Psoas muscle (tissue), 8 donors: ENCODE measurements at regions of chr2 and their contacts with region 1.

Region 1: DNA sequence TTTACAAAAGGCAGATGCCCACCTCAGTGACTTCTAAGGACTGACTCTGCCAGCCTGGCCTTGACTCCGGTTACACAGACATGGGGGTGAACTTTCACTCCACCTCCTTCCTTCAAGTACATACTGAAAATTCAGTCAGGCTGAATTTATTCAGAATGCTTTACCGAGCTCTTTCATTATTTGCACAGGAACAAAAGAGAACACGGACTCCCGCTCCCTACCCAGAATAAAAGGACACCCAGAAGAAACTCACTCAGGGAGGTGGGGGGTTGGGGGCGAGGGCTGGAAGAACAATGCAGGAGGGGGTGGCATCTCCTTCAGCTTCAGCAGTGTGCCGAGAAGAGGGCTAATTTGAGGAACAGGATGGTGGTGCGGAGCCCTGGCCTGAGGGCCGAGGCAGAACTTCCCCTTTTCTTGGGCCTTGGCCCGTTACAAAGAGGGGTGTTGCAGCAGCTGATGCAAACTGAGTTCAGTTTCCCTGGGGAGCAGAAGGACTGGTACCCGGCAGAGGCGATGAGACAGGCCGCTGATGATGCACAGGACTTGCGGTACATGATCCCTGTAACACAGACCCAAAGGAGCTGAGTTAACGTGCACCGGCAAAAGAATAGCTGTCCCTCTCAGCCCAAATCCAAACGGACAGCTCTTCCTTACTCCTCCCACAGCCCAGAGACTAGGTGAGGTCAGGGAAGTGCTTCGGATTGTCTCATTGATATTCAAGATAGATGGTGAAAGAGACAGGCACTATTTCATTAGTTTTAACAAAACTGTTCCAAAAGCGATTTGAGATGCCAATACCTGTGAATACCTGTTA is 24.1 kb downstream of the LYPD1 start:
- DNase-seq: no peak
- ATAC-seq: no peak
- H3K4me3 ChIP-seq: no peak overlapping the region
- H3K27ac ChIP-seq: no peak overlapping the region
- H3K4me1 ChIP-seq: no peaks in the 10 kb centered on the region
- H3K27me3 ChIP-seq: no peaks in the 10 kb centered on the region
- CTCF ChIP-seq: no peak

Region 2: DNA sequence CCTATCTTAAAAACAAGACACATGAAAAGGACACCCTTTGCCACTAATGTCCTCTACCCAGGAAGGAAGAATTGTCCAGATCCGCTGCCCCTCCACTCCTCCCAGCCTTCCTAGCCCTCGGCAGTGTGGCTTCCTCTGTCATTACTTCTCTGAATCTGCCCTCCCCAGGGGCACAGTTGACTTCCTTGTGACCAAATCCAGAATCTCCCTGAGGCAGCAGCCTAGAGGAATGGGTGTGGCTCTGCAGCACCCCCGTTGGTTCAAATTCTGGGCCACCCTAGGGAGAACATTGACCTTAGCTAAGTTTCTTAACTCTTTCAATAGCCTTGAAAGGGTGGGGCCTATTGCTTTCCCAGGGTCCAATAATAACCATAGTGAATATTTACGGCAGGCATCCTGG is 75.3 kb before region 1 on chr2:
- intact Hi-C with region 1: no loop called
- DNase-seq: no peak
- ATAC-seq: no peak
- H3K4me3 ChIP-seq: no peak overlapping the region
- H3K27ac ChIP-seq: no peak overlapping the region
- H3K4me1 ChIP-seq: no peaks in the 10 kb centered on the region
- H3K27me3 ChIP-seq: no peaks in the 10 kb centered on the region
- CTCF ChIP-seq: no peak

Region 3: GRCh38 chr2:132609101-132609890 is 36.6 kb before region 1 on chr2:
- intact Hi-C with region 1: no loop called
- DNase-seq: no peak
- ATAC-seq: no peak
- H3K4me3 ChIP-seq: no peak overlapping the region
- H3K27ac ChIP-seq: no peak overlapping the region
- H3K4me1 ChIP-seq: no peaks in the 10 kb centered on the region
- H3K27me3 ChIP-seq: peaks cover 0 to 2% (median 0%) of the 10 kb centered on the region in 3 donors
- CTCF ChIP-seq: no peak

Region 4: GRCh38 chr2:132911726-132912724 is 266.1 kb after region 1 on chr2:
- intact Hi-C with region 1: no loop called
- DNase-seq: no peak
- ATAC-seq: no peak
- H3K4me3 ChIP-seq: no peak overlapping the region
- H3K27ac ChIP-seq: no peak overlapping the region
- H3K4me1 ChIP-seq: no peaks in the 10 kb centered on the region
- H3K27me3 ChIP-seq: no peaks in the 10 kb centered on the region
- CTCF ChIP-seq: no peak

Region 5: DNA sequence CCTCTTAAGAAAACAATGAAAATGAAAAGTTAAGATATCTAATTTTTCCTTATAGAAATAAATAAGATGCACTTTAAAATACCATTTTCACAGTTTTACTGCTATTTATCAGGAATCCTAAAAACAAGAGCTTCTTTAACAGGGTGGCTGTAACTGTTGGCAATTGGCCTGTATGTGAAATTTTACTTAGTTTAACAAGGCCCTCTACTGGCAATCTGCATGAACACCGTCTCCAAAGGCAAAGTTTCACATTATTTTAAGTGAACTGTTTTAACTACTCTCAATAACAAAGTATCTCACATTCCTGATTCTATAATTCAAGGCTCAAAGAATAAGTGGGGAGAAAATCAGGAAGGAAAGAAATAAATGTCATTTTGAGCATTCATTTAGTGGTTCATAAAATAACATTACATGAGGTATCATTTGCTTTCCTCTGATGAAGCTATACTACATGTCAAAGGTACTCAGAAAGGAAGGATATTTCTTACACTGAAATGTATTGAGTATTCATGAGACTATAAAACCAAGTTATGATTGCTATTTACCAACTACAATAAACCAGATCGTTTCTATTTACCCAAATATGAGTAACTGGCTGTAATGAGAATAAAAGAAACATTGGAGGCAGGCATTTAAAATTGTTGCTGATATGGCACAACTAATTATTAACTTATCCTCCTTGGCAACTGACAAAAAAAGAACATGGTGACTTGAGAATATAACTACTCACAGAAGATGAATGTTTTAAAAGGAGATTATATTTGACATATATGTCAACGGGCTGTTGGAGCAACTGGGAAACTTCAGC is 915.3 kb after region 1 on chr2:
- intact Hi-C with region 1: loop called in 1 of 2 experiments (anchors 10 kb)
- DNase-seq: no peak
- ATAC-seq: peak in 1 of 4 donors; percentile 45
- H3K4me3 ChIP-seq: no peak overlapping the region
- H3K27ac ChIP-seq: no peak overlapping the region
- H3K4me1 ChIP-seq: no peaks in the 10 kb centered on the region
- H3K27me3 ChIP-seq: no peaks in the 10 kb centered on the region
- CTCF ChIP-seq: peak; percentile 51